GM10248 (cell line): ENCODE measurements at regions of chr19 and their contacts with region 1.

Region 1: GRCh38 chr19:57406516-57407123 is 4.3 kb upstream of the ZNF17 start:
- DNase-seq: peak; percentile 76
- CTCF ChIP-seq: peak; percentile 81

Region 2: DNA sequence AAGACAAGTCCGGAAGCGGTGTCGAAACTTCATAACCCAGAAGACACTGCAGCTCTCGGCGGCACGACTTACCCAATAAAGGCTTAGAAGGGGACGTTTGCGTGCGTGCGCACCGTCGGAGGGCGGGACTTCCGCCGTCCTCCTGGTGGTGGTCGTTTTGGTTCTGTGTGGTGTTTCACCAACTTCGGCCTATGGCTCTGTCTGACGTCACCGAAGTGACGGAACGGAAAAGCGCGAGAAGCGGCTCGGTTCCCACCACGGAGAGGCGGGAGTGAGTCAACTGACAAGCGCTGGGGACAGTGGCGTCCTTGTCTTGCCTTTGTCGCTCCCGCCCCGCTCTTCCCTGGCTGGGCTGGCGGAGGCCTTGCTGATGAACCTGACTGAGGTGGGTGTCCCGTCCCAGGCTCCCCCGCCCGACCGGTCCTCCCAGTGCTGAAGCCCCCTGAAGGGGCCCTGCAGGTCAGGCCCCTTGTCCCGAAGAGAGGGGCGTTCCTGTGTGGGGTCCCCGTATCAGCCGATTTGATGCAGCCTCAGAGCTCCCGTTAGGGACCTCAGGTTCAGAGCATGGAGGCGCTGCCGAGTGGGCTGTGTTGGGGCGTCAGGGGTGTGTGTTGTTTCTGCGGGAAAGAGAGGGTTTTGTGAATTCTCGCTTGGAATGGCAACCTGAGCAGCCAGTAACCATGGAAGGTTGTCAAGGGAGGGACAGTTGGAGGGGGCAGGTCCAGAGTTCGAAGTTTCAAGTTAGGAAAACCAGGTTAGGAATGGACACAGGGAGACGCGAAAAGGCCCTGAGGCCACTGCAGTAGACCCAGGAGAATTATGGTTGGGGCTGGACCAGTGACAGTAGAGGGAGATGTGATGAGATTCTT is 16.7 kb before region 1 on chr19 and contains the start of gene ZNF548:
- CTCF ChIA-PET with region 1: interaction called, 13 read pairs
- POLR2A ChIA-PET with region 1: no interaction called
- DNase-seq: peak; percentile 92
- CTCF ChIP-seq: peak; percentile 34

Region 3: DNA sequence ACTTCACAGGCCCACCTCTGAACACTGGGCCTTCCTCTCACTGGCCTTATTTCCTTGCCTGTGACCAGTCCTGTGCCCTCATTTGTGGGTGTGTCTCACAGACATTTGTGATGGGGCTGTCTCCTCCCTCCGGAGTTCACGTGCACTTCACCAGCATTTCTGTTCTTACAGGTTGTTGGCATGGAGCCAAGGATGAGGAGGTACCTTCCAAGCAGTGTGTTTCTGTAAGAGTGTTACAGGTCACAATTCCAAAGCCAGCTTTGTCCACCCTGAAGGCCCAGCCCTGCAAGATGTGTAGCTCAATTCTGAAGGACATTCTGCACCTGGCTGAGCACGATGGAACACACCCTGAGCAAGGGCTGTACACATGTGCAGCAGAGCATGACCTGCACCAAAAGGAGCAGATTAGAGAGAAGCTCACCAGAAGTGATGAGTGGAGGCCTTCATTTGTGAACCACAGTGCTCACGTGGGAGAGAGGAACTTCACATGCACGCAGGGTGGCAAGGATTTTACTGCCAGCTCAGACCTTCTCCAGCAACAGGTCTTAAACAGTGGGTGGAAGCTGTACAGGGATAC is 36.6 kb after region 1 on chr19:
- CTCF ChIA-PET with region 1: no interaction called
- POLR2A ChIA-PET with region 1: no interaction called
- DNase-seq: no peak
- CTCF ChIP-seq: no peak